Activated T-helper 1 cell treated with anti-CD3 and anti-CD28 coated beads, Interleukin-12 subunit alpha, Interleukin-12 subunit beta, Interleukin-2, Interleukin-4 antibody, amounts not matched to agents 30 ng/mL and 10 ng/mL and 1 ng/mL, durations not matched to agents 14 hours and 24 hours and 36 hours (primary cell): ENCODE measurements at regions of chr4 and their contacts with region 1.

Region 1: GRCh38 chr4:101020956-101021355 is 326.4 kb downstream of the PPP3CA start:
- DNase-seq: peak; percentile 16
- H3K4me3 Mint-ChIP-seq: peak overlapping the region; percentile 43
- H3K27ac Mint-ChIP-seq: peak overlapping the region; percentile 67
- H3K4me1 Mint-ChIP-seq: peaks cover 62% of the 10 kb centered on the region
- H3K27me3 Mint-ChIP-seq: no peaks in the 10 kb centered on the region

Region 2: DNA sequence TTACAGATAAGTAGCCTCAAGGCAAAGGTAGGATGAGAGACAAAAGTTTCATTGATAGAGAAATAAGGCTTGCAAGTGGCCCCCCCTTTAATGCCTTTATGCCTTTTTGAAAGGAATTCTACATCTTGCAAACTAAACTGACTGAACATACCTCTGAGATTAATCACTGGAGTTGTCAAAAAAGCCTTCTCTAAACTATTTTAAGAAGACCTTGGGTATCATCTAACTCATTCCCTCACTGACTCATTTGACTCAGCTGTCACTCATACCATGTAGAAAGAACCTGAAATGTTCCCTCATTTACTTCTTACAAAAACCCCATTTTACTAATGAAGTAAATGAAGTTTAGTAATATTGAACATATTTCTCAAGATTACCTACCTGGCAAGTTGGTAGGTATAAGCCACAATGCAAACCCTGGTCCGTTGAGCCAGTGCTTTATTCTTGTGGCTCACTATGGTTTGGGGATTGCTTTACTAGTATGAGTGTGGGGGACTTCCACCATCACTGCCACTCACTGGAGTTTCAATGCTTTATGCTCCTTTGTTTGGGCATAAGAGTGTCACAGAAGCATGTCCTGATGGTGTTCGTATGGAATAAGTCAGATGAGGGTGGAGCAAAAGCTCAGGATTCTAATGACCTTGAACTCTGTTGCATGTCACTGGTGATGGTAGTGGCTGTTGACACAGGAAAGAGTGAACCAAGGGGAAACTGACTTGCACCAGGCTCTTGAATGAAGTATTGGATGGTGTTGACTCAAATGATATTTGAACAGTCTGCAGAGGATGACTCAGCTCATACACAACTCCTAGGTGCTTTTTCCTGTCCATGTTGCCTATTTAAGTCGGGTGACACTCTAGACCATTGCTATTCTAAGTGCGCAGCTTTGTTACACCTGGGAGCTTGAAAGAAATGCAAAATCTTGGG is 197.6 kb before region 1 on chr4:
- intact Hi-C with region 1: loop called (anchors 1 kb)
- DNase-seq: peak; percentile 32
- H3K4me3 Mint-ChIP-seq: no peak overlapping the region
- H3K27ac Mint-ChIP-seq: peak overlapping the region; percentile 79
- H3K4me1 Mint-ChIP-seq: peaks cover 40% of the 10 kb centered on the region
- H3K27me3 Mint-ChIP-seq: no peaks in the 10 kb centered on the region

Region 3: GRCh38 chr4:101103381-101104142 is 82.6 kb after region 1 on chr4:
- intact Hi-C with region 1: loop called (anchors 1 kb)
- DNase-seq: no peak
- H3K4me3 Mint-ChIP-seq: no peak overlapping the region
- H3K27ac Mint-ChIP-seq: no peak overlapping the region
- H3K4me1 Mint-ChIP-seq: peaks cover 18% of the 10 kb centered on the region
- H3K27me3 Mint-ChIP-seq: no peaks in the 10 kb centered on the region

Region 4: GRCh38 chr4:101282076-101282844 is 261.3 kb after region 1 on chr4:
- intact Hi-C with region 1: loop called (anchors 2 kb)
- DNase-seq: peak; percentile 8
- H3K4me3 Mint-ChIP-seq: peak overlapping the region; percentile 31
- H3K27ac Mint-ChIP-seq: no peak overlapping the region
- H3K4me1 Mint-ChIP-seq: peaks cover 43% of the 10 kb centered on the region
- H3K27me3 Mint-ChIP-seq: no peaks in the 10 kb centered on the region

Region 5: GRCh38 chr4:101527188-101527587 is 506.2 kb after region 1 on chr4:
- intact Hi-C with region 1: loop called (anchors 1 kb)
- DNase-seq: peak; percentile 68
- H3K4me3 Mint-ChIP-seq: peak overlapping the region; percentile 8
- H3K27ac Mint-ChIP-seq: peak overlapping the region; percentile 67
- H3K4me1 Mint-ChIP-seq: peaks cover 32% of the 10 kb centered on the region
- H3K27me3 Mint-ChIP-seq: peaks cover 26% of the 10 kb centered on the region